ENCODE measurements at regions of chr7 and their contacts with region 1.

Region 1: DNA sequence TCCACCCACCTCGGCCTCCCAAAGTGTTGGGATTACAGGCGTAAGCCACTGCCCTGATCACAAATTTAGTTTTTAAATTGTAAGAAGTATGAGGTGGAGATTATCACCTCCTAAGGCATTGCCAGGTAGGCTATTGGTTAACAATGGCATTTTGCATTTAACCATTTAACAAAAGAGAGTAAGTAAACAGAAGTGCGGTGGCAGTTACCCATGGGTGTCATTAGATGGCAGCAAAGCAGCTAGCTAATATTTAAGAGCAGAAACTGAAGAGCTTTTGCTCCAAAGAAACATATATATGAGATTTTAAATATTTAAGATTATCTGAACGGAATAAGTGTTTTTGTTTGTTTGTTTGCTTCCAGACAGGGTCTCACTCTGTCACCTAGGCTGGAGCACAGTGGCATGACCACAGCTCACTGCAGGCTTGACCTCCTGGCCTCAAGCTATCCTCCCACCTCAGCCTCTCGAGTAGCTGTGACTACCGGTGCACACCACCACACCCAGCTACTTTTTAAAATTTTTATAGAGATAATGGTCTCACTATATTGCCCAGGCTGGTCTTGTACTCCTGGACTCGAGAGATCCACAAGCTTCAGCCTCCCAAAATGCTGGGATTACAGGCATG is 325.5 kb upstream of the C7orf33 start:
- DNase-seq: peak; percentile 24
- ATAC-seq: peak; percentile 64
- H3K4me3 ChIP-seq: no peak overlapping the region
- H3K27ac ChIP-seq: no peak overlapping the region
- H3K4me1 ChIP-seq: peaks cover 0 to 6% of the 10 kb centered on the region in 2 experiments; a peak in 1 of 4 replicates
- H3K27me3 ChIP-seq: no peaks in the 10 kb centered on the region
- CTCF ChIP-seq: peak; percentile 48 to 78 (median 70); a peak in 5 of 6 replicates
- POLR2A ChIP-seq: no peak
- RAD21 ChIP-seq: peak; percentile 79

Region 2: GRCh38 chr7:148480479-148481146 is 215.6 kb after region 1 on chr7:
- CTCF ChIA-PET with region 1: interaction called, 21 read pairs
- POLR2A ChIA-PET with region 1: interaction called, 3 read pairs
- RAD21 ChIA-PET with region 1: interaction called in 1 of 2 experiments, 9 read pairs
- intact Hi-C with region 1: no loop called
- DNase-seq: no peak
- ATAC-seq: no peak
- H3K4me3 ChIP-seq: no peak overlapping the region
- H3K27ac ChIP-seq: no peak overlapping the region
- H3K4me1 ChIP-seq: no peaks in the 10 kb centered on the region
- H3K27me3 ChIP-seq: 0 out of 2 replicates have a peak, but pooled peaks cover under 1% of the 10 kb centered on the region
- CTCF ChIP-seq: no peak
- POLR2A ChIP-seq: no peak
- RAD21 ChIP-seq: no peak

Region 3: DNA sequence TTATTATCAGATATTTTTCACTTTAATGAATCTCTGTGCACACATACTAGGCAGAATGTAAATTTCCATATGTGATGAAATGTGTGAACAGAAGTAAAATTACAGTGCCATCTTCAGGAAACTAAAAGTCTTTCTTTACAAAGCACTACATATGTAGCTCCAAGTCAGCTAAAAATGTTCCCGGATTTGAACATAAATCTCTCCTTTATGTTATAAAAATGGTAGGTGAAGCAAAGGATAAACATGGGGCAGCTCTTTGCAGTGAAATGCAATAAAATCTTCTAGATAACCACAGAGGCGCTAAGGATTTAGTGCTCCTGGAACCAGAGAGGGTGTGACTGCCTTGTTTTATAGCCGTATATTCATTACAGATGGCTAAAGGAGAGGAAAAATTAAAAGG is 220.6 kb after region 1 on chr7:
- CTCF ChIA-PET with region 1: interaction called, 21 read pairs
- POLR2A ChIA-PET with region 1: interaction called, 3 read pairs
- RAD21 ChIA-PET with region 1: interaction called in 1 of 2 experiments, 9 read pairs
- intact Hi-C with region 1: no loop called
- DNase-seq: no peak
- ATAC-seq: no peak
- H3K4me3 ChIP-seq: no peak overlapping the region
- H3K27ac ChIP-seq: no peak overlapping the region
- H3K4me1 ChIP-seq: no peaks in the 10 kb centered on the region
- H3K27me3 ChIP-seq: peaks cover 4% of the 10 kb centered on the region; the same call in 1 of the 2 replicates
- CTCF ChIP-seq: 0 out of 6 replicates have a peak, but pooled peaks of 2 of the 3 experiments have one; percentile 8 to 17
- POLR2A ChIP-seq: no peak
- RAD21 ChIP-seq: peak; percentile 45

Region 4: DNA sequence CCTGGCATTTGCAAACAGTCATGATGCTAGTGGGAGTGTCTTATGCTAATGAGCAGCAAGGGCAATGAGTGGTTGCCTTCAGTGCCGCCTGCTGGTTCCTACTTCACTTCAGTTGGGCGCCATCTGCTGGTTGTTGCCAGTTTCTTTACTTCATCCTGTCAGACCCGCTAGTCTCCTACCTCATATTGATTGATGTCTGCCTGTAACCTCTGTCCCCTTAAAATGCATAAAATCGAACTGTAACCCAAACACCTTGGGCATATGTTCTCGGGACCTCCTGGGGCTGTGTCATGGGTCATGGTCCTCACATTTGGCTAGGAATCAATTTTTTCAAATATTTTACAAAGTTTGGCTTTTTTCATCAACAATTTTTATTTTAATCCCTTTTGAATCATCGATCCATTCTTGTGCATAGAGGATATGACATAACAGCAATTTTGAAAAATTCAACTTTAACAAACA is 262.7 kb after region 1 on chr7:
- CTCF ChIA-PET with region 1: interaction called, 13 read pairs
- POLR2A ChIA-PET with region 1: no interaction called
- RAD21 ChIA-PET with region 1: no interaction called
- intact Hi-C with region 1: loop called (anchors 2 kb)
- DNase-seq: peak; percentile 88
- ATAC-seq: peak; percentile 99
- H3K4me3 ChIP-seq: no peak overlapping the region
- H3K27ac ChIP-seq: no peak overlapping the region
- H3K4me1 ChIP-seq: no peaks in the 10 kb centered on the region
- H3K27me3 ChIP-seq: no peaks in the 10 kb centered on the region
- CTCF ChIP-seq: peak; percentile 90 to 99 (median 94)
- POLR2A ChIP-seq: no peak
- RAD21 ChIP-seq: peak; percentile 64

Measured in HCT116 (cell line).